Activated CD8-positive, alpha-beta T cell treated with anti-CD3 and anti-CD28 coated beads, Interleukin-2, amount 10 ng/mL, durations not matched to agents 7 days and 5 days (primary cell): ENCODE measurements at regions of chr3 and their contacts with region 1.

Region 1: DNA sequence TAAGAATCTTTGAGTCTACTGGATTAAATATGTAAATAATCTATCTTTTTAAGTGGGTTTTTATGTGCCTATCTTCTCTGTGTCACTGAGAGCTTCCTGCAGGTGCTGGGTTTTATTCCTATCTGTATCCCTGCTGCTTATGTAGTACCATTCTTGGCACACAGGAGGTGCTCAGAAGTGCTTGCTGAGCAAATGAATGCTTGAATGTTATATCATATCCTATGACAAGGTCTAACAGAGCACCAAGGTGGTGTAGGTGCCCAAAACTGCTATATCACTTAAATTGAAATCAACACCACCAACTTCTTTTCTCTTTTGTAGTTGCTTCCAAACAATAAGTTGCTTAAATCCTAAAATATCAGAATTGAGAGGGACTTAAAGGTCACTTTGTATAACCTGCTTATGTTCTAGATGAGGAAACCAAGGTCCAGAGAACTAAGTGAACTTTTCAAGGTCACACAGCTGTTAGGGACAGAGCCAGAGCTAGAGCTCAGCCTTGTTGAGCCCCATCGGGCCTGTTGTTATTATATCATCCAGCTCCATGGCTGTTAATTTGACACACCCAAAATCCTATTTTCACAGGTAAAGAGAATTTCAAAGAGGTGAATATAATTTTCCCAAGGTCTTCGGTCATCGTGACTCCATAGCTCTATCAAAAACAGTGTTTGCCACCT is 46.0 kb downstream of the CCNL1 start:
- DNase-seq: no peak
- ATAC-seq: no peak
- H3K4me3 Mint-ChIP-seq: no peak overlapping the region
- H3K27ac Mint-ChIP-seq: no peak overlapping the region
- H3K4me1 Mint-ChIP-seq: peaks cover 8% of the 10 kb centered on the region
- H3K27me3 Mint-ChIP-seq: peaks cover 3% of the 10 kb centered on the region

Region 2: DNA sequence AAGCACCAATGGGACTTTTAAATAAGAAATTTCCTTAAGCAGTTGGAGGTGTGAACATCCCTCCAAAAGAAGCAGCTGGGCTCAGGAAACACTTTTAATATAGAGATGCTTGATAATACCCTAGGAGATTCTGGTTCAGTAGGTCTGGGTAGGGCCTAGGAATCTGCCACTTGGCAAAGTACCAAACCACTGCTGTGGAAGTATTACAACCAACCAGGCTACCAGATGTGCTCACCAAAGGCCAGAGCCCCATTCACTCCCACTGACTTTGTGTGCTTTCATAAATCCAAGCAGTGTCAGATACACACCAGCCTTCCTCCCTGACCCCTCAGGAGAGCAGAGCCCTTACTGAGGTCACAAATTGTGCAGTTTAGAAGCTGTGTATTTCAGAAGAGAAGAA is 116.6 kb before region 1 on chr3:
- CTCF ChIA-PET with region 1: no interaction called
- POLR2A ChIA-PET with region 1: no interaction called
- DNase-seq: no peak
- ATAC-seq: no peak
- H3K4me3 Mint-ChIP-seq: no peak overlapping the region
- H3K27ac Mint-ChIP-seq: no peak overlapping the region
- H3K4me1 Mint-ChIP-seq: no peaks in the 10 kb centered on the region
- H3K27me3 Mint-ChIP-seq: peaks cover 5% of the 10 kb centered on the region

Region 3: DNA sequence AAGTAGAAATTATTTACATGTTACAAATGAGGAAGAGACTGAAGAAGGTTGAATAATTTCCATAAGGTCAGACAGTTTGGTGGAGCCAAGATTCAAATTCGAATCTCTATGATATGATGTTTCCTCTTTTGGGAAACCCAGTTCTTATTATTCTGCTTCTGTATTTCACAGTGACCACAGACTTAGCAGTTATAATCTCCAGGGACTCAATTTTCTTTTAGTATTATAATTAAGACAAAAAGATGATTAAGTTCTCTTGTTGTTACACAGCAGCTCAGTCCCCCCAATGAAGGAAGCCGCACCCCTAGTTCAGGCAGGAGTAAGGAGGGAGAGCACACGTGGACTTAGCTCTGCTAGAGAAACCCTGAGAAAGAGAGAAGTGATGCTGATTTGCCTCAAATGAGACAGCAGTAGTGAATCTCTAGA is 84.6 kb before region 1 on chr3:
- CTCF ChIA-PET with region 1: no interaction called
- POLR2A ChIA-PET with region 1: no interaction called
- DNase-seq: no peak
- ATAC-seq: no peak
- H3K4me3 Mint-ChIP-seq: no peak overlapping the region
- H3K27ac Mint-ChIP-seq: no peak overlapping the region
- H3K4me1 Mint-ChIP-seq: peaks cover 2% of the 10 kb centered on the region
- H3K27me3 Mint-ChIP-seq: peaks cover 3% of the 10 kb centered on the region

Region 4: DNA sequence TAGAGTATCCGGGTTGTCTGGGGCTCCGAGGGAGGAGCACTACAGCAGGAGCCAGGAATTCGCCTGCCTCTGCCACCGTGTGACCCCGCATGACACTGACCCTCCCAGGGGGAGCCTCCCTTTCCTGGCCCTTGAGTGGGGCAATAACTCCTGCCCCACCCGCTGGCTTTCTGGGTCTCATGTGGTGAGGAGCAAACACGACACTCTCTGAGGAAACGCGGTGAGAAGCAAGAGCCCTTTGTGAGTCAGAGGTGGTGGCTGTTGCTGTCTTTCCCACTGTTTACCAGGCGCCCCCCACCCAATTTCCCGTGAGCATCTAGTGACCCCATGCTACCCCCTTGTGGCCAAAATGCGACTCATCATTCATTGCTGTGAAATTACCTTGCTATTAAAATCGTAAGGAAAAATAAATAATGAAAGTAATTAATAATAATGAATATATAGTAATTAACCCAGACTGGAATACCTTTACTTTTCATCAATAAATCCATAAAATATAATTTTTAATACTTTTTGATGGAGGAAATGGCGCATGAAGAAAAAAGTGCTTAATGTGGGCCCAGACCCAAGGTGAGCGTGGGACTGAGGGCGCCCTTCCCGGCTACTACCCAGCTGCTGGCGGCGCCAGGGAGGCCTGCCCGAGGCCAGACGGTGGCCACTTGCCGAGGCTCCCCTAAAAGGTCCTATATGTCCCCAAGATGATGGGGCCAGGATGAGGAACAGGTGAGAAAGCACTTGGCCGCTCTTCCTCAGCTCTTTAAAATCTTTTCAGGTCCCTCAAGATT is 16.7 kb after region 1 on chr3:
- CTCF ChIA-PET with region 1: interaction called, 26 read pairs
- POLR2A ChIA-PET with region 1: no interaction called
- DNase-seq: peak; percentile 78
- ATAC-seq: peak; percentile 41
- H3K4me3 Mint-ChIP-seq: peak overlapping the region; percentile 50
- H3K27ac Mint-ChIP-seq: peak overlapping the region; percentile 92
- H3K4me1 Mint-ChIP-seq: peaks cover 89% of the 10 kb centered on the region
- H3K27me3 Mint-ChIP-seq: no peaks in the 10 kb centered on the region

Region 5: GRCh38 chr3:157311633-157312375 is 197.8 kb after region 1 on chr3:
- CTCF ChIA-PET with region 1: no interaction called
- POLR2A ChIA-PET with region 1: no interaction called
- DNase-seq: no peak
- ATAC-seq: no peak
- H3K4me3 Mint-ChIP-seq: no peak overlapping the region
- H3K27ac Mint-ChIP-seq: no peak overlapping the region
- H3K4me1 Mint-ChIP-seq: no peaks in the 10 kb centered on the region
- H3K27me3 Mint-ChIP-seq: no peaks in the 10 kb centered on the region

Region 6: DNA sequence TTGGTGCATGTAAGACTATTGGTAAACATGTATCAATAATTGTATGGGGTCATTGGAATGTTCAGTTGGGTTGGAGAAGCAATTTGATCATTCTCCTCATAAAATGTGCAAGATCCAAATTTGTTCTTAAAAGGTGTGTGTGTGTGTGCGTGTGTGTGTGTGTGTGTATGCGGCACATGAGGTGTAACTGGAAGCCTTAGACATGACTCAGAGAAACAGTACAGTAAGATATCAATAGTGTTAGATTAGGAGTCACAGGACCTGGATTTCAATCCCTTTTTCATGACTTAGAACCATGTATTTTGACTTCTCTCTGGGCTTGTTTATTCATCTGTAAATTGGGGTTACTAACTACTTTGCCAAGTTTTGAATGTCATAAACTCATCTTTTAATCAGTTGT is 1034.2 kb after region 1 on chr3:
- CTCF ChIA-PET with region 1: no interaction called
- POLR2A ChIA-PET with region 1: no interaction called
- DNase-seq: no peak
- ATAC-seq: no peak
- H3K4me3 Mint-ChIP-seq: no peak overlapping the region
- H3K27ac Mint-ChIP-seq: no peak overlapping the region
- H3K4me1 Mint-ChIP-seq: no peaks in the 10 kb centered on the region
- H3K27me3 Mint-ChIP-seq: no peaks in the 10 kb centered on the region